ENCODE measurements at regions of chr17 and their contacts with region 1.

Region 1: GRCh38 chr17:2592971-2593820 is at the start of gene PAFAH1B1:
- DNase-seq: peak; percentile 94 to 97 (median 96)
- ATAC-seq: peak; percentile 76 to 96 (median 92)
- H3K4me3 ChIP-seq: peak within 1 kb of the TSS; percentile 75 to 100 (median 95)
- H3K27ac ChIP-seq: peak within 1 kb of the TSS; percentile 95 to 100 (median 99)
- H3K4me1 ChIP-seq: peaks cover 4 to 47% (median 38%) of the 10 kb centered on the region in 12 donors
- H3K27me3 ChIP-seq: no peaks in the 10 kb centered on the region
- CTCF ChIP-seq: peak in 5 of 12 donors; percentile 12 to 48 (median 45)
- POLR2A ChIP-seq: peak in 1 of 2 donors; percentile 81
- total RNA-seq, gene PAFAH1B1: 80.5 to 154 (median 121) TPM

Region 2: GRCh38 chr17:2511462-2512369 is 81.5 kb before region 1 on chr17 and contains the start of gene METTL16:
- intact Hi-C with region 1: loop called in 4 of 10 experiments (anchors 2 to 5 kb)
- DNase-seq: peak; percentile 96 to 99 (median 97)
- ATAC-seq: peak; percentile 99 to 100 (median 100)
- H3K4me3 ChIP-seq: peak within 1 kb of the TSS; percentile 44 to 85 (median 72)
- H3K27ac ChIP-seq: peak within 1 kb of the TSS; percentile 81 to 95 (median 87)
- H3K4me1 ChIP-seq: peaks cover 4 to 35% (median 23%) of the 10 kb centered on the region in 12 donors
- H3K27me3 ChIP-seq: no peaks in the 10 kb centered on the region
- CTCF ChIP-seq: no peak
- POLR2A ChIP-seq: peak in 1 of 2 donors; percentile 60
- total RNA-seq, gene METTL16: 13.9 to 32.0 (median 24.6) TPM

Region 3: GRCh38 chr17:2647957-2648356 is 54.8 kb after region 1 on chr17:
- intact Hi-C with region 1: loop called in 2 of 10 experiments (anchors 10 kb)
- DNase-seq: no peak
- ATAC-seq: no peak
- H3K4me3 ChIP-seq: no peak overlapping the region
- H3K27ac ChIP-seq: no peak overlapping the region
- H3K4me1 ChIP-seq: peaks cover 0 to 16% (median 2%) of the 10 kb centered on the region in 12 donors
- H3K27me3 ChIP-seq: no peaks in the 10 kb centered on the region
- CTCF ChIP-seq: no peak
- POLR2A ChIP-seq: no peak

Region 4: DNA sequence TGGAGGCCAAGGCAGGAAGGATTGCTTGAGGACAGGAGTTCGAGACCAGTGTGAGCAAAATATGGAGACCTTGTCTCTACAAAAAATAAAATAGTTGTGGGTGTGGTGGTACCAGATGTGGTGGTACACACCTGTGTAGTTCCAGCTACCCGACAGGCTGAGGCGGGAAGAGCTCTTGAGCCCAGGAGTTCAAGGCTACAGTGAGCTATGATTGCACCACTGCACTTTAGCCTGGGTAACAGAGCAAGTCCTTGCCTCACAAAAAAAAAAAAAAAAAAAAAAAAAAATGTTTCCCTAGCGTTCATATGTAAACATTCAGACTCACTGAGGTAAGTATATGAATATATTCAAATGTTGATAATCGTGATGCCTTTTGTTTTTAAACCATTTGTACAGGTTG is 78.8 kb after region 1 on chr17:
- intact Hi-C with region 1: loop called in 6 of 10 experiments (anchors 2 to 10 kb)
- DNase-seq: no peak
- ATAC-seq: no peak
- H3K4me3 ChIP-seq: no peak overlapping the region
- H3K27ac ChIP-seq: no peak overlapping the region
- H3K4me1 ChIP-seq: no peaks in the 10 kb centered on the region
- H3K27me3 ChIP-seq: no peaks in the 10 kb centered on the region
- CTCF ChIP-seq: no peak
- POLR2A ChIP-seq: no peak

Region 5: GRCh38 chr17:2707721-2708584 is 114.8 kb after region 1 on chr17:
- intact Hi-C with region 1: loop called in 1 of 10 experiments (anchors 1 kb)
- DNase-seq: peak; percentile 84 to 94 (median 86)
- ATAC-seq: peak; percentile 41 to 73 (median 56)
- H3K4me3 ChIP-seq: peak overlapping the region; percentile 1 to 98 (median 56)
- H3K27ac ChIP-seq: peak overlapping the region; percentile 81 to 100 (median 89)
- H3K4me1 ChIP-seq: peaks cover 10 to 81% (median 51%) of the 10 kb centered on the region in 12 donors
- H3K27me3 ChIP-seq: no peaks in the 10 kb centered on the region
- CTCF ChIP-seq: peak; percentile 29 to 71 (median 52)
- POLR2A ChIP-seq: peak in 1 of 2 donors; percentile 22

Measured in heart left ventricle (tissue), 16 donors.